Activated B cell treated with CpG ODN at 0.5 μM for 24 hours (primary cell): ENCODE measurements at regions of chr5 and their contacts with region 1.

Region 1: GRCh38 chr5:117519957-117520500 is 945.4 kb upstream of the SEMA6A start:
- DNase-seq: no peak
- ATAC-seq: no peak
- H3K4me3 Mint-ChIP-seq: no peak overlapping the region
- H3K27ac Mint-ChIP-seq: no peak overlapping the region
- H3K4me1 Mint-ChIP-seq: no peaks in the 10 kb centered on the region
- H3K27me3 Mint-ChIP-seq: no peaks in the 10 kb centered on the region
- CTCF ChIP-seq: no peak

Region 2: DNA sequence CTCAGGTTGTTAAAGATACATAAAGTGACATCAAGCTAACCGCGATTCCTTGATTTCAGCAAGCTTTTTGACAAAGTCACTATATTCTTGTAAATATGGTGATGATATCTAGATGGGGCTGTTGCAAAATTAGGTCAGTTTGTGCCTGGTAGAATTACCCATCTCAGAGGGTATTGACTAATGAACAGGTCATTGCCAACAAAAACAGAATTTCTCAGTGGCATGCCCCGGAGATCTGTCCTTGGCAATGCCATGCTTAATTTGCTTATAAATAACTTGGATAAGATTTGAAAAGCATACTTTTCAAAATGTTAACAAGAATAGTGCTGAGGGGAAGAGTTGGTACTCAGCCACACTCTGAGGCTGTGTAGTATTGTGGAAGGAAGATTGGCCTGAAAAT is 162.1 kb before region 1 on chr5:
- CTCF ChIA-PET with region 1: no interaction called
- POLR2A ChIA-PET with region 1: interaction called, 13 read pairs
- intact Hi-C with region 1: no loop called
- DNase-seq: no peak
- ATAC-seq: no peak
- H3K4me3 Mint-ChIP-seq: no peak overlapping the region
- H3K27ac Mint-ChIP-seq: no peak overlapping the region
- H3K4me1 Mint-ChIP-seq: no peaks in the 10 kb centered on the region
- H3K27me3 Mint-ChIP-seq: no peaks in the 10 kb centered on the region
- CTCF ChIP-seq: no peak